Panc1 (cell line): ENCODE measurements at regions of chr10 and their contacts with region 1.

Region 1: GRCh38 chr10:95056744-95057363 is 12.4 kb downstream of the CYP2C8 start:
- DNase-seq: no peak
- ATAC-seq: no peak
- H3K4me3 ChIP-seq: no peak overlapping the region
- H3K27ac ChIP-seq: no peak overlapping the region
- H3K4me1 ChIP-seq: no peaks in the 10 kb centered on the region
- H3K27me3 ChIP-seq: no peaks in the 10 kb centered on the region
- CTCF ChIP-seq: no peak

Region 2: DNA sequence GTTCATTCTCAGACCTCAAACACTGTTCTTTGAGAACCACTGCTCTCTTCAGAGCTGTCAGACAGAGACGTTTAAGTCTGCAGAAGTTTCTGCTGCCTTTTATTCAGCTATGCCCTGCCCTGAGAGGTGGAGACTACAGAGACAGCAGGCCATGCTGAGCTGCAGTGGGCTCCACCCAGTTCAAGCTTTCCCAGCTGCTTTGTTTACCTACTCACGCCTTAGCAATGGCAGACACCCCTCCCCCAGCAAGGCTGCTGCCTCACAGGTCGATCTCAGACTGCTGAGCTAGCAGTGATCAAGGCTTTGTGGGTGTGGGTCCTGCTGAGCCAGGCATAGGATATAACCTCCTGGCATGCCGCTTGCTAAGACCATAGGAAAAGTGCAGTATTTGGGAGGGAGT is 198.8 kb before region 1 on chr10:
- CTCF ChIA-PET with region 1: no interaction called
- POLR2A ChIA-PET with region 1: interaction called, 17 read pairs
- in situ Hi-C with region 1: no loop called
- intact Hi-C with region 1: no loop called
- DNase-seq: no peak
- ATAC-seq: no peak
- H3K4me3 ChIP-seq: no peak overlapping the region
- H3K27ac ChIP-seq: no peak overlapping the region
- H3K4me1 ChIP-seq: no peaks in the 10 kb centered on the region
- H3K27me3 ChIP-seq: no peaks in the 10 kb centered on the region; the same call in 1 of the 2 replicates
- CTCF ChIP-seq: no peak

Region 3: GRCh38 chr10:94991243-94991888 is 65.5 kb before region 1 on chr10:
- CTCF ChIA-PET with region 1: no interaction called
- POLR2A ChIA-PET with region 1: no interaction called
- in situ Hi-C with region 1: no loop called
- intact Hi-C with region 1: no loop called
- DNase-seq: no peak
- ATAC-seq: no peak
- H3K4me3 ChIP-seq: no peak overlapping the region
- H3K27ac ChIP-seq: no peak overlapping the region
- H3K4me1 ChIP-seq: no peaks in the 10 kb centered on the region
- H3K27me3 ChIP-seq: no peaks in the 10 kb centered on the region
- CTCF ChIP-seq: no peak

Region 4: DNA sequence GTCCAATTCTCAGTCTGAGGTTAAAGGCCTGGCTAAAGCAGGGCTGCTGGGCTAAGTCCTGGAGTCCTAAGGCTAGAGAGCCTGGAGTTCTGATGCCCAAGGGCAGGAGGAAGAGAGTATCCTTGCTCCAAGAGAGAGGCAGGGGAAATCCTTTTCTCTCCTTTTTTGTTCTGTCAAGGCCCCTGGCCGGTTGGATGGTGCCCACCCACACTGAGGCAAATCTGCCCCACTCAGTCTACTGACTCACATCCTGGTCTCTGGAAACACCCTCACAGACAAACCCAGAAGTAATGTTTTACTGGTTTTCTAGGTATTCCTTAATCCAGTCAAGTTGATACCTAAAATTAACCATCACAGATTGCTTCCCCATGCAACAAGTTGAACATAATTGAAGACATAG is 1096.2 kb after region 1 on chr10:
- CTCF ChIA-PET with region 1: no interaction called
- POLR2A ChIA-PET with region 1: no interaction called
- in situ Hi-C with region 1: no loop called
- intact Hi-C with region 1: no loop called
- DNase-seq: no peak
- ATAC-seq: no peak
- H3K4me3 ChIP-seq: no peak overlapping the region
- H3K27ac ChIP-seq: no peak overlapping the region
- H3K4me1 ChIP-seq: no peaks in the 10 kb centered on the region
- H3K27me3 ChIP-seq: no peaks in the 10 kb centered on the region
- CTCF ChIP-seq: no peak